ENCODE measurements at regions of chr18 and their contacts with region 1.

Region 1: DNA sequence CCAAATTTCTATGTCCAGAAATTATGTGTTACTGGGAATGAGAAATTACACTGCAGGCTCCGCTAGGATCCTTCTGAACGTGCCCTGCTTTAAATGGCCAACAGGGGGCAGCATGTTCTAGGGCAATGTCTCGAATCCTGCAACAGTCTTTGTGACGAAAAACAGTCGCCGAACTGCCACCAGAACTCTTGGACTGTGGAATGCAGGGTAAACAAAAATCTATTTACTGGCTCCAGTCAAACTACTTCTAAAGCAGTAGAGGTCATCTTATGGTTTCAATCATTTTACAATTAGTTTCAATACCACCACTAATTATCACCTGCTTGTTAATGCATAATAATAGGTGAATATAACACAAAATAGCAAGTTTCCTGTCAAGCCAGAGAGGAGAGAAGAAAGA is 9.8 kb upstream of the ZNF397 start:
- DNase-seq: peak; percentile 87
- ATAC-seq: peak; percentile 94
- H3K4me3 Mint-ChIP-seq: peak overlapping the region; percentile 48
- H3K27ac Mint-ChIP-seq: no peak overlapping the region
- H3K4me1 Mint-ChIP-seq: peaks cover 3% of the 10 kb centered on the region
- H3K27me3 Mint-ChIP-seq: peaks cover 2% of the 10 kb centered on the region

Region 2: DNA sequence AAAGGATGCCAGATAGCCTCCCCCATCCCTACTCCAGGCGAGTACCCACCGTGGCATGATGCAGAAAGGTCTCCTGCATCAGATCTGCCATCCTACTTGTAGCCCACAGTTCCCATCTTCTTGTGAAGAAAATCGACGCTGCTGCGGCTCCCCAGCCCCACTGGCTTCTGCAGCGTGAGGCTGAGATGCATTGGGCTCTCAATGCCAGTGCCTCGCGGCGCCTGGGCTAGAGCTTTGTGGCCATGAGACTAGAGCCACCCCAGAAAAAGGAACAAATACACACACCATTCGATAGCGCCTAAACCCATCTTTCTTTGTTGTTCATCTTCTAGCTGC is 1009.1 kb before region 1 on chr18:
- CTCF ChIA-PET with region 1: no interaction called
- POLR2A ChIA-PET with region 1: no interaction called
- intact Hi-C with region 1: no loop called
- DNase-seq: no peak
- ATAC-seq: no peak
- H3K4me3 Mint-ChIP-seq: no peak overlapping the region
- H3K27ac Mint-ChIP-seq: no peak overlapping the region
- H3K4me1 Mint-ChIP-seq: peaks cover 2% of the 10 kb centered on the region
- H3K27me3 Mint-ChIP-seq: peaks cover 37% of the 10 kb centered on the region

Region 3: DNA sequence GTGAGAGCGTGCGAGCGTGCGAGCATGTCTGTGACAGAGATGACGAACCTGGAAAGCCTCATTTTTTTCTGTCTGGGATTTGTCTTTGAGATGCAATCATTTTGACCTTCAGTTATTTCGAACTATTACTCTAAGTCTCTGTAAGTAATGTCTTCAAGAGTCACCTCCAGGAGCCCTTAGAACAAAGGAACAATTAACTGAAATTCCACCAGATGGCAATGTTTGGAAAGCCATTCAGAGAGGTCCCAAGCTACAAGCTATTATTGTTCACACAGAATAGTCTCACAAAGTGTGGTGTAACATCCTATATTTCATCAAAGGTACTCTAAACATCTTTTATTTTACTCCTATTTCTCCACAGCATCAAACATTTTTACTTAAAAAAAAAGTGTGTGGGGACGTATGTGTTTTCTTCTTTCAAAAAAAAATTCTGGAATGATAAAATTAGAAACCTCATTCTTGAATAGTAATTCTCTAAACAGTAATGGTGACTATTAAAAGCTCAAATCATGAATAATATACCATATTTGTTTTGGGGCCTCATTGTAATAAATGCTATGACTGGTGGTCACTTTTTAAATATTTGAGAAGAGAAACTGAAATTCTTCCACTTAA is 225.0 kb before region 1 on chr18:
- CTCF ChIA-PET with region 1: interaction called, 6 read pairs
- POLR2A ChIA-PET with region 1: no interaction called
- intact Hi-C with region 1: loop called in 1 of 2 experiments (anchors 2 kb)
- DNase-seq: no peak
- ATAC-seq: peak; percentile 94
- H3K4me3 Mint-ChIP-seq: no peak overlapping the region
- H3K27ac Mint-ChIP-seq: no peak overlapping the region
- H3K4me1 Mint-ChIP-seq: no peaks in the 10 kb centered on the region
- H3K27me3 Mint-ChIP-seq: no peaks in the 10 kb centered on the region

Region 4: DNA sequence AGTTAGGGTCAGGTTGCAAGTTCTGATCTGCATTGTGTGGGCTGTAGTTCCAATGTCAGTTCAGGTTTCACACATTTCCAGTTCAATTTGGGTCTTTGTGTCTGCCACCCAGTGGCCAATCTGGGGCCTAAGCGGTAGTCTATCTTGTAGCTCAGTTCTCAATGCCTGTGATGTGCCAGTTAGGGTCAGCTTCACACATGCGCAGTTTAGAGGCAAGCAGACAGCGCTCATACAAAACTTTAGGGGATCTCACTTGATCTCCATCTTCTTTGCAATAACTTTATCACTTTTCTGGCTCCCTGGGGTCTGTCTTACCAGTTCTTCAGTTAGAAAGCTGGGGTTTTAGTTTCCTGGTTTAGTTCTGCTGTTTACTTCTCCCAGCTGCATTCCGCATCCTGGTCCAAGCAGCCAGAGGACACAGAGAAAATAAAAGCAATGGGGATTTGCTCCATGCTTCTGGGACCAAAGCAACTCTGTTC is 124.1 kb after region 1 on chr18:
- CTCF ChIA-PET with region 1: interaction called, 18 read pairs
- POLR2A ChIA-PET with region 1: no interaction called
- intact Hi-C with region 1: loop called (anchors 1 kb)
- DNase-seq: peak; percentile 73
- ATAC-seq: peak; percentile 99
- H3K4me3 Mint-ChIP-seq: no peak overlapping the region
- H3K27ac Mint-ChIP-seq: no peak overlapping the region
- H3K4me1 Mint-ChIP-seq: peaks cover 3% of the 10 kb centered on the region
- H3K27me3 Mint-ChIP-seq: no peaks in the 10 kb centered on the region

Region 5: DNA sequence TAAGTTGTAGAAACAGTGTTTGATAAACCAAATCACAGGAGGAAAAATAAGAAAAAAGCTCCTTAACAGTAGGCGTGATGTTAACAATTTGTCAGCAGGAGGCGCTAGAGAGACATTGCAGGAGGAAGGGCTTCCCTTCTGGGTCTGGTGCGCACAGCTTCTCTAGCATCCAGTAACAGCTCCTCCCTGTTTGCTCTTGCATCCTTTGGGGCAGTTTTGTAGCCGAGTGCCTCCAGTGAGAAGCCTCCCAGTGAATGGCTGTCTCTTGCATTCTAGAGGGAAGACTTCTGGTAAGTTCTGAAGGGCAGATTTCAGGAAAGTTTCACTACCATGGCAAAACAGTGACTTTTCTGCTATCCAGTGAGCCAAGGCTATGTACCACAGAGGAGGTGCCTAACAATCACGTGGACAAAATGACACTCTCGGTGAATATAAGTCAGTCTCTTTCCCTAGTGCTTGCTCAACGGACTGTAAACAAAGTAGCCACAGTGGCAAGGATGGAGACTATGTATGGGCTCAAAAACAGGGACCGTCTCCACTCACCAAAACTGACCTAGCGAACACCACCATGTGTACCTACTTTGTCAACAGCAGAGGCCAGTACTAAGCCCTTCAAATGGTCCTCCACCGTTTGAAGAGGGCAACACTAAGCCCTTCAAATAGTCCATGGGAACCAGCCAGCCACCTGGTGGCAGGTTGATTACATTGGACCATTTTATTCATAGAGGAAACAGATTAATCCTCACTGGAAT is 155.7 kb after region 1 on chr18:
- CTCF ChIA-PET with region 1: interaction called, 25 read pairs
- POLR2A ChIA-PET with region 1: no interaction called
- intact Hi-C with region 1: loop called in 1 of 2 experiments (anchors 1 kb)
- DNase-seq: peak; percentile 79
- ATAC-seq: peak; percentile 98
- H3K4me3 Mint-ChIP-seq: no peak overlapping the region
- H3K27ac Mint-ChIP-seq: no peak overlapping the region
- H3K4me1 Mint-ChIP-seq: peaks cover 2% of the 10 kb centered on the region
- H3K27me3 Mint-ChIP-seq: peaks cover 15% of the 10 kb centered on the region